Activated CD4-positive, alpha-beta T cell treated with anti-CD3 and anti-CD28 coated beads for 36 hours (primary cell): ENCODE measurements at regions of chr10 and their contacts with region 1.

Region 1: GRCh38 chr10:75220274-75220673 is 9.7 kb downstream of the VDAC2 start:
- DNase-seq: no peak
- ATAC-seq: no peak
- H3K4me3 Mint-ChIP-seq: no peak overlapping the region
- H3K27ac Mint-ChIP-seq: peak overlapping the region; percentile 67
- H3K4me1 Mint-ChIP-seq: peaks cover 49% of the 10 kb centered on the region
- H3K27me3 Mint-ChIP-seq: no peaks in the 10 kb centered on the region

Region 2: DNA sequence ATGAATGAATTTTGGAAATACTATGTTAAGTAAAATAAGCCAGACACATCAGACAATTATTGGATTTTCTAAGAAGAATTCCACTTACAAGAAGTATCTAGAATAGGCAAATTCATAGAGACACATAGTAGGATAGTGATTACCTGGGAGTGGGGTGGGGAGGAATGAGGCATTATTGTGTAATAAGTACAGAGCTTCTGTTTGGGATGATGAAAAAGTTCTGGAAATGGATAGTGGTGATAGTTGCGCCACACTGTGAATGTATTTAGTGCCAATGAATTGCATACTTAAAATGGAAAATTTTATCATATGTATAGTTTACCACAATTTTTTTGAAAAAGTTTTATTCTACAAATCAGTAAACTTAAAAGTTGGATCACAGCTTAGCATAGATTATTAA is 691.1 kb before region 1 on chr10:
- CTCF ChIA-PET with region 1: no interaction called
- POLR2A ChIA-PET with region 1: no interaction called
- intact Hi-C with region 1: no loop called
- DNase-seq: no peak
- ATAC-seq: no peak
- H3K4me3 Mint-ChIP-seq: no peak overlapping the region
- H3K27ac Mint-ChIP-seq: no peak overlapping the region
- H3K4me1 Mint-ChIP-seq: no peaks in the 10 kb centered on the region
- H3K27me3 Mint-ChIP-seq: no peaks in the 10 kb centered on the region

Region 3: GRCh38 chr10:74683621-74684364 is 536.5 kb before region 1 on chr10:
- CTCF ChIA-PET with region 1: no interaction called
- POLR2A ChIA-PET with region 1: no interaction called
- intact Hi-C with region 1: no loop called
- DNase-seq: no peak
- ATAC-seq: no peak
- H3K4me3 Mint-ChIP-seq: no peak overlapping the region
- H3K27ac Mint-ChIP-seq: no peak overlapping the region
- H3K4me1 Mint-ChIP-seq: peaks cover 18% of the 10 kb centered on the region
- H3K27me3 Mint-ChIP-seq: no peaks in the 10 kb centered on the region

Region 4: DNA sequence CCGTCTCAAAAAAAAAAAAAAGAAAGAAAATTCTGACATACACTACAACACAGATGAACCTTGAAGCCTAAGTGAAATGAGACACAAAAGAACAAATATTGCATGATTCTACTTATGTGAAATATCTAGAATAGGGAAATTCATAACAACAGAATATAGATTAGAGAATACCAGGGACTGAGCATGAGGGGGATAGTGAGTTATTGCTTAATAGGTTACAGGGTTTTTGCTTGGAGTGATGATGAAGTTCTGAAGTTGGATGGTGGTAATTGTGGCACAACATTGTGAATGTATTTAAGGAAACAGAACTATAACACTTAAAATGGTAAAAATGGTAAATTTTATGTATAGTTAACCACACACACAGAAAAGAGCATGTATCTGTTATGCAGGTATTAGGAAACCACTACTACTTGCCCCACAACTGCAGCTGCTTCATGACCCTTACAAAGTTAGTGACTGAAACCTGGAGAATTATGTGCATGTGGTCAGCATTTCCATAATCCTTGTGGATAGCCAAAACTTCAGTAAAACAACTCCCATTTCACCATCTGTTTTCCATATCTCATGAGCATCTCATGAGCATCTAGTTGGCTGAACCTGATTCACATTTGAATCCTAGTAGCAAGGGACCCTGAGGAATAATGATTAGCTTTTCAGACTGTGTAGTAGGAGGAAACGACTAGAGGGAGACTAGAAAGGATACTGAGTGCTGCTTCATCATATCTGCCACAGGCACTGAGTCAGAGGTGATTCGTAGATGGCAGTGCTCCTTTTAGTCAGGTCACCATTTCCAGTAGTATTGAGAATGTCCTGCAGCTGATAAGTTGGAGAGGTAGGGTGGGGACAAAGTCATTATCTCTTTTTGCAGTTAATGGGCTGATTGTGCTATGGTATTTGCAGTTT is 82.5 kb before region 1 on chr10:
- CTCF ChIA-PET with region 1: no interaction called
- POLR2A ChIA-PET with region 1: no interaction called
- intact Hi-C with region 1: no loop called
- DNase-seq: peak; percentile 66
- ATAC-seq: peak; percentile 94
- H3K4me3 Mint-ChIP-seq: no peak overlapping the region
- H3K27ac Mint-ChIP-seq: peak overlapping the region; percentile 67
- H3K4me1 Mint-ChIP-seq: peaks cover 37% of the 10 kb centered on the region
- H3K27me3 Mint-ChIP-seq: no peaks in the 10 kb centered on the region

Region 5: GRCh38 chr10:75187961-75188426 is 32.3 kb before region 1 on chr10:
- CTCF ChIA-PET with region 1: interaction called, 10 read pairs
- POLR2A ChIA-PET with region 1: no interaction called
- intact Hi-C with region 1: no loop called
- DNase-seq: peak; percentile 81
- ATAC-seq: peak; percentile 91
- H3K4me3 Mint-ChIP-seq: no peak overlapping the region
- H3K27ac Mint-ChIP-seq: peak overlapping the region; percentile 72
- H3K4me1 Mint-ChIP-seq: peaks cover 10% of the 10 kb centered on the region
- H3K27me3 Mint-ChIP-seq: no peaks in the 10 kb centered on the region